Heart left ventricle (tissue), 16 donors: ENCODE measurements at regions of chr17 and their contacts with region 1.

Region 1: GRCh38 chr17:1186923-1187771 is 7.4 kb upstream of the ABR start:
- DNase-seq: peak; percentile 89 to 93 (median 91)
- ATAC-seq: peak; percentile 84 to 93 (median 91)
- H3K4me3 ChIP-seq: peak overlapping the region; percentile 18 to 59 (median 48)
- H3K27ac ChIP-seq: peak overlapping the region; percentile 14 to 90 (median 84)
- H3K4me1 ChIP-seq: peaks cover 2 to 66% (median 47%) of the 10 kb centered on the region in 12 donors
- H3K27me3 ChIP-seq: no peaks in the 10 kb centered on the region
- CTCF ChIP-seq: peak; percentile 98 to 99 (median 98)
- POLR2A ChIP-seq: peak in 1 of 2 donors; percentile 36

Region 2: DNA sequence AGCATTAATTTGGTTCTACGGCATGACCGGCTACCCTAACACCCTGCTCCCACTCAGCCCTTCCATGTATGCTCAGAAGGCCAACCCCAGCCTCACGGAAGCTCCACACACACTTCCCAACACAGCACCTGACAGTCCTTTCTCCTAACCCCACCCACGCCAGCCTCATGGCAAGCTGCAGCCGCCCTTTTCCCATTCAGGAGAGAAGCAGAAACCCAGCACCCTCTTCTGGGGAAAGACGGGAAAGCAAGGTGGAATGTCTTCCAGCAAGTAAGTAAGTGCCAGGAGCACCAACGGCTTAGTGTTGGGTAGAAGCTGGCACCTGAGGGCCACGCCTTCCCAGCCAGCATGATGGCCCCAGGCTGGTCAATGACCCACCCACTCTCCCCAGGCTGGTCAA is 39.5 kb before region 1 on chr17:
- intact Hi-C with region 1: loop called in 4 of 10 experiments (anchors 2 to 5 kb)
- DNase-seq: peak in 3 of 5 donors; percentile 43 to 67 (median 50)
- ATAC-seq: peak in 3 of 4 donors; percentile 27 to 41 (median 28)
- H3K4me3 ChIP-seq: no peak overlapping the region
- H3K27ac ChIP-seq: no peak overlapping the region
- H3K4me1 ChIP-seq: peaks cover 0 to 49% (median 13%) of the 10 kb centered on the region in 12 donors
- H3K27me3 ChIP-seq: no peaks in the 10 kb centered on the region
- CTCF ChIP-seq: peak; percentile 13 to 60 (median 42)
- POLR2A ChIP-seq: no peak

Region 3: DNA sequence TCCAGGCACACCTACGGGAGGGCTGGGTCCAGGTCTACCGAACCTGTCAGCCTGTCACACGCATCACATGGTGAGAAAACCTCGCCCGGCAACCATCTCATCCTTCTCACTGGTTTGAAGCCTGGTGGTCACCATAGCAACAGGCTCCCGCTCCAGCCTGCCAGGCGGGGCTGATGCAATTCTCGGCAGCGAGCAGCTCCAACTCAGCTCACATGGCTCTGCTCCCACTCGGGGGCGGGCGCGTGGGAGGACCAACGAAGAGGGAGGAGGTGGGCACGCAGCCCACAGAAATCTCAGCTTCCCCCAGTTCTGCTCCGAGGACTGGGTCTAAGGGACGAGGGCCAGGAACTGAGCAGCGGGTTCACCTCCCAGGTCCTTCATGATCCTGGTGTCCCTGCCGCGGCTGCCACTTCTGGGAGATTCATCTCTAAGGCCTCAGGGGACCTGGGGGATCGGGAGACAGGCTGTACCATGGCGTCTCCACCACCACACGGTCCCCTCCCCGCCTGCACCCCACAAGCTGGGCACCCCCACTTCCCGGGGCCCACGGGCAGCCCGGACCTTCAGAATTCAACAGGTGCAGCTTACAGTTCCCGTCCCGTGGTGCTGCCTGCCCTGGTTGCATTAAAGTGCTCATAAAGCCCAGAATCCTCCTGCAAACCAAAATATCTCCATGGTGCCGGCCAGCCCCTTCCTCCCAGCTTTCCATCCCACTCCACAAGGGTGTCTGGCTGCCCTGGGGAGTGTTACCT is 33.2 kb before region 1 on chr17:
- intact Hi-C with region 1: loop called in 4 of 10 experiments (anchors 2 to 5 kb)
- DNase-seq: peak in 3 of 5 donors; percentile 60 to 73 (median 71)
- ATAC-seq: no peak
- H3K4me3 ChIP-seq: no peak overlapping the region
- H3K27ac ChIP-seq: no peak overlapping the region
- H3K4me1 ChIP-seq: peaks cover 0 to 41% (median 16%) of the 10 kb centered on the region in 12 donors
- H3K27me3 ChIP-seq: no peaks in the 10 kb centered on the region
- CTCF ChIP-seq: no peak
- POLR2A ChIP-seq: no peak